BJ (cell line): ENCODE measurements at regions of chr17 and their contacts with region 1.

Region 1: DNA sequence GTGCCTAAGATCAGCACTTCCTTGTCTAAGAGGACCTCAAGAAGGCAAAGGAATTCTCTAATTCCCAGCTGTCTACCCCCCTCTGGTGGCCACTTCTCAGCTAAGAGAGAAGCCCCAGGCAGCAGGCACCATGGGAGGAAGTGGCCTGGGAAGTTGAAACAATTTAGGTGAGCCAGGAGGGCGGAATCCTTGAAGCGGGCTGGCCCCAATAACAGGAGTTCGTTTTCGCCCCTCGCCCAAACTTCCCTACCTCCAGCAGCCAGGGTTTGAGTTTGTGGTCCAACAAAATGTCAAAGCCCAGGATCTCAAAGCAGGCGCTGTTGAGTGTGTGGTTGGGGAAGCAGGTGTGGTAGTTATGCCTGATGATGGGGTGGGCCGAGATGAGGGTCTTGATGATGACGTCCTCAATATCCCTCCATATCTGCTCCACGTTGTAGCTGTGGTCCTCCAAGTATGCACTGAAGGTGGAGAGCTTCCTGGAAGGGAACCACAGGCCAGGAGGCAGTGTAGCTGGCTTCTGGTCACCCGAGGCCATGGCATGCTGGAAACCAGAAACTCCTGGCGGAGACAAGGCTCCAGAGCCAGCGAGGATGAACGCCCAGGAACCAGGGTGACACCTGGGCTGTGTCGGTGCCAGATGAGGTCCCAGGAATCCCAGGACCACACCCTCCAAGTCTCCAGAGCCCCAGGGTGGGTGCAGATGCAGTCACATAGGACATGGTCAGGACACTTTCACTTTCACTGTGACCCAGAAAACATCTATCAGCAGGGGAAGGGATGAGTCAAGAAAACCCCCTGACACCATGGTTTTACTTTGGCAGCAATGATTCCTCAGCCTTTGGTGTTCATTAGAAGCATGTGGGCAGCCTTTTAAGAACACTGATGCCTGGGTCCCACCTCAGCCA is 25.6 kb downstream of the TTLL6 start:
- DNase-seq: peak; percentile 35
- H3K4me3 ChIP-seq: no peak overlapping the region
- H3K27me3 ChIP-seq: peaks cover 13% of the 10 kb centered on the region
- CTCF ChIP-seq: peak; percentile 89

Region 2: DNA sequence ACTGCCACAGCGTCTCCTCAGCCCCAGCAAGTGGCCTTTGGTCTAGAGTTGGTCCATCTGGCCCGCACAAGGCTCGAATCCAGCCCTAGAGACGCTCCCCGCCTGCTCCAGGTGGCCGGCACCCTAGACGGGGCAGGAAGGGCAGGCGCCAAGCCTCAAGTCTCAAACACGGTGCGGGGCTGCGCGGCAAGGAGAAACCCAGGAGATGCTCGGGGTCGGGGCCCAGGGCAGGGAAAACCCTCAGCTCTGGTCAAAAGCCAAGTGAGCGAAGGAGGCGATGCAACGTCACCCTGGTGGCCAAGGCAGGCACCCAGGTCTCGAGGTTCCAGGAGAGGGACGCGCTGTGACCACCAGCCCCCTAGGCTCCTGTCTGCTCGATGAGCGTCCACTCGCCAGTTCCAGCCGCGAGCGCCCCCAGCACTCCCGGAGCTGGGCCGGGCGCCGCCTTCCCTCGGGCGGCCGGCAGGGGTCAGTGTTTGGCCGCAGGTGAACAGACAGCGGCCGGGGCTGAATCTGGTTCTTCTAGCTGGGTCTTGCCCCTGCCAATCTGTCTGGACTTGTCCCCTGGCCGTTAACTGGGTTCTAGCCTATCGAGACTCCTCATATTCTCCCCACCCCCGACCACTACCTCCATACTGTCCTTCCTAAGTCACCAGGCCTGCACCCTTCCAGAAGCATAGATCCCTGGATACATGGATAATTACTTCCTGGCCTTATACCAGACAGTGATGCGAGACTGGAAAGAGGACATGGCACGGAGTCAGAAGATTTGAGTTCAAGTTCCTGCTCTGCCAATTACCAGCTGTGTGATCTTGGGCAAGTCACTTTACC is 113.0 kb before region 1 on chr17:
- CTCF ChIA-PET with region 1: interaction called, 86 read pairs
- POLR2A ChIA-PET with region 1: no interaction called
- DNase-seq: no peak
- H3K4me3 ChIP-seq: peak overlapping the region; percentile 16; the same call in 1 of the 2 replicates
- H3K27me3 ChIP-seq: peaks cover 9% of the 10 kb centered on the region
- CTCF ChIP-seq: peak; percentile 96

Region 3: GRCh38 chr17:48732688-48733629 is 58.4 kb before region 1 on chr17:
- CTCF ChIA-PET with region 1: interaction called, 152 read pairs
- POLR2A ChIA-PET with region 1: no interaction called
- DNase-seq: no peak
- H3K4me3 ChIP-seq: no peak overlapping the region
- H3K27me3 ChIP-seq: peaks cover 60% of the 10 kb centered on the region
- CTCF ChIP-seq: no peak

Region 4: DNA sequence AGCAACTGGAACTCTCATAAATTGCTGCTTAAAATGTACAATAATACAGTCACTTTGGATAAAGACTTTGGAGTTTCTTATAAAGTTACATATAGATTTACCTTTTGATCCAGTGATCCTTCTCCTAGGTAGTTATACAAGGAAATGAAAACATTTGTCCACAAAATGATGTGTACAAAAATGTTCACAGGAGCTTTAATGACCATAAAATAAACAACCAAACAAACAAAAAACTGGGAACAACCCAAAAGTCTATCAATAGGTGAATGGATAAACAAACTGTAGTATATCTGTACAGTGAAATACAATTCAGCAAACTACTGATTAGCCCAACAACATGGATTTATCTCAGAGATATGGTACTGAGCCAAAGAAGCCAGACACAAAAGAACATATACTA is 12.0 kb before region 1 on chr17:
- CTCF ChIA-PET with region 1: interaction called, 11 read pairs
- POLR2A ChIA-PET with region 1: no interaction called
- DNase-seq: no peak
- H3K4me3 ChIP-seq: no peak overlapping the region
- H3K27me3 ChIP-seq: peaks cover under 1% of the 10 kb centered on the region; the same call in 1 of the 2 replicates
- CTCF ChIP-seq: no peak

Region 5: DNA sequence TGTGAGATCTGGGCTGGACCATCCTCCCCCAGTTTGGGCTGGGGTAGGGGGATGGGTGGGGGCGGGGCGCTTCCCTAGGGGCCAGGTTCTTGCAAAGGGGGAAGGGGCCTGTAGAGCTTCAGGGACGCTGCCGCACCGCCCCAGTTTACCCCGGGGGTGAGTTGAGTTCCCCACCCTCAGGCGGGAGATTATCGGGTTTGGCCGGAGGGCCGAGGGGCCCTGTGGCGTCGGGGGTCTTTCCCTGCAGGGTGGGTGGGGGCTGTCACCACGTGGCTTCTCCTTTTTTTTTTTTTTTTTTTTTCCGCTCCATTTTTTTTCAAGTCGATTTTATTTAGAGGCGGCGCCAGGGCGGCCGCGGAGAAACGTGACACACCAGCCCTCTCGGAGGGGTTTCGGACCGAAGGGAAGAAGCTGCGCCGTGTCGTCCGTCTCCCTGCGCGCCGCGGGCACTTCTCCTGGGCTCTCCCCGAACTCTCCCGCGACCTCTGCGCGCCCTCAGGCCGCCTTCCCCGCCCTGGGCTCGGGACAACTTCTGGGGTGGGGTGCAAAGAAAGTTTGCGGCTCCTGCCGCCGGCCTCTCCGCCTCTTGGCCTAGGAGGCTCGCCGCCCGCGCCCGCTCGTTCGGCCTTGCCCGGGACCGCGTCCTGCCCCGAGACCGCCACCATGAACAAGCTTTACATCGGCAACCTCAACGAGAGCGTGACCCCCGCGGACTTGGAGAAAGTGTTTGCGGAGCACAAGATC is 205.9 kb after region 1 on chr17 and contains the start of gene IGF2BP1:
- CTCF ChIA-PET with region 1: no interaction called
- POLR2A ChIA-PET with region 1: interaction called, 10 read pairs
- DNase-seq: no peak
- H3K4me3 ChIP-seq: peak within 1 kb of the TSS; percentile 41
- H3K27me3 ChIP-seq: peaks cover 24% of the 10 kb centered on the region
- CTCF ChIP-seq: no peak
- polyA plus RNA-seq, gene IGF2BP1: 3.7 and 5.3 TPM in 2 replicates

Region 6: GRCh38 chr17:49016788-49017463 is 225.5 kb after region 1 on chr17:
- CTCF ChIA-PET with region 1: no interaction called
- POLR2A ChIA-PET with region 1: no interaction called
- DNase-seq: no peak
- H3K4me3 ChIP-seq: no peak overlapping the region
- H3K27me3 ChIP-seq: peaks cover 5% of the 10 kb centered on the region
- CTCF ChIP-seq: no peak